Cardiac septum (tissue), 1 donor: ENCODE measurements at regions of chr3 and their contacts with region 1.

Region 1: GRCh38 chr3:173045770-173046382 is 95.2 kb downstream of the SPATA16 start:
- DNase-seq: no peak

Region 2: GRCh38 chr3:172557221-172558220 is 488.4 kb before region 1 on chr3:
- intact Hi-C with region 1: no loop called
- DNase-seq: no peak

Region 3: GRCh38 chr3:172836390-172836997 is 209.4 kb before region 1 on chr3:
- intact Hi-C with region 1: loop called (anchors 2 kb)
- DNase-seq: no peak

Region 4: DNA sequence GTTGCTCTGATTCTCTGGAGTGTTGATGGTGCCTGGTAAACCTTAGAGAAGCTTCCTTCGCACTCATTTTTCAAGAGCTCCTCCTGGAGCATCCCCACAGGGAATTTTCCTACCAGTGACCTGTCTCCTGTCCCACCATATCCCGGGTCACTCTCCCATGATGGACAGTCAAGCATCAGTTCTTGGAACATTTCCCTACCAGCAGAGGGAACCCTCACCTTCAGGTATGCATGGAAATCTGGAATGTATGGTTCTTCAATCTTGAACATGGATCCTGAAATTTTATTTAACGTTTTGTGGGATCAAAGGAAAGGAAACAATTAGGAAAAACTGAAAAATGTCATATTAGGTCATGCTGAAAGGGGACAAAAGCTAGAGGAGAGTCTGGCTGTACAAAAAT is 58.6 kb before region 1 on chr3:
- intact Hi-C with region 1: no loop called
- DNase-seq: no peak

Region 5: DNA sequence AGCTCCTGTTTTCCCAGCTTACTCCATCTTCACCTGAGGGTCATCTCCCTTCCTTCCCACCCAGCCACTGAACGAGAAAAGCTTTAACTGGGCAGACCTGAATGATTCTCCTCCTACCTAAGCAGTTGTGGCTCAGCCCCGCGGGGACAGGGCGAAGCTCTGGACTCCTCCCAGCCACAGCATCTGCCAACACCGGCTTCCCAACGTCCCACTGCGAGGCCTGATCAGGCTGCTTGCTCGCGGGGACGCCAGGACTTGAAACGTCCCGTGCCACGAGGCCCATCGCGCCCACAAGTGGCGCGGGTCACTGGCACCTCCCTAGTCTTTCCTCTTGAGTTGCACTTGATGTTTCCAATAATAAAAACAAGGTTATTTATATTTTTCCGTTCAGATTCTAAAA is 95.1 kb after region 1 on chr3 and contains the start of gene SPATA16:
- intact Hi-C with region 1: no loop called
- DNase-seq: no peak
- total RNA-seq, gene SPATA16: not detected

Region 6: DNA sequence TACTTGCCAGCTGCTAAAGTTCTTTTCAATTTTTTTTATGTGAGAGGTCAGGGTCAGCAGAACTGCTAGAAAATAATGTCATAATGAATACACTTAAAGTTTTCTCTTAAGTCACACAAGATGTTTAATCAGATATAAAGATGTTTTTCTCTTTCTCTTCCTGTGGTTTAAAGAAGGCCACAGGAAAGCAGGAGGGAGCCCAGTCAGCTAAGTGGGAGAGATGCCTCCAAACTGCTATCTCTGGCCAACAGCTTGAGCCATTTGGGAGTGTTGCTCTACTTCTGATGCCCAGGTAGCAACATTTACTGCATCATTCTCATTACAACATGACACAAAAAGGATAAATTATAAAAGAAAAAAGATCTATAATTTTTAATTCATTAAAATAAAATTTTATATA is 306.0 kb after region 1 on chr3:
- intact Hi-C with region 1: no loop called
- DNase-seq: no peak